A549 (cell line): ENCODE measurements at regions of chr2 and their contacts with region 1.

Region 1: GRCh38 chr2:164498836-164499235 is 122.4 kb downstream of the GRB14 start:
- DNase-seq: no peak
- ATAC-seq: no peak
- H3K4me3 ChIP-seq: no peak overlapping the region
- H3K27ac ChIP-seq: no peak overlapping the region
- H3K4me1 ChIP-seq: peaks cover 5% of the 10 kb centered on the region; the same call in 2 of the 3 replicates
- CTCF ChIP-seq: no peak
- EP300 ChIP-seq: no peak
- POLR2A ChIP-seq: no peak
- RAD21 ChIP-seq: no peak

Region 2: DNA sequence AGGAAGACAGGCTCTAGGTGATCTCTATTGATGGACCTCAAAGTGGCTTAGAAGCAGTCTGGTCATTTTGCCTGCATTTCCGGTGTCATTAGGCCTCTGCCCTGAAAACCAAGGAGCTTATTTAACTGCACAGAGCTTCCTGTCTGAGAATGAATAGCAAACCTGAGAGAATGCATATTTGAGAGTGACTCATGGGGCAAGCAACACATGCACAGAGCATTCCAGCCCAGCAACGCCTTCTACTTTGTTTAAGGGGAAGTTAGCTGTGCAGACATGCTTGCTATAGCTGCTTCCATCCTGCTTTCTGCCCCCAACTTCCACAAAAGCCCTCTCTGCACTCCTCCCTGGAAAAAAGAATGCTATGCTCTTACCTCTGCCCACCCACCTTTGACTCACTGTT is 110.3 kb before region 1 on chr2:
- CTCF ChIA-PET with region 1: no interaction called
- POLR2A ChIA-PET with region 1: no interaction called
- DNase-seq: peak; percentile 3 to 64
- ATAC-seq: peak; percentile 88 to 92; a peak in 5 of 6 replicates
- H3K4me3 ChIP-seq: no peak overlapping the region
- H3K27ac ChIP-seq: no peak overlapping the region
- H3K4me1 ChIP-seq: peaks cover 7% of the 10 kb centered on the region; the same call in 1 of the 3 replicates
- CTCF ChIP-seq: no peak
- EP300 ChIP-seq: no peak
- POLR2A ChIP-seq: no peak
- RAD21 ChIP-seq: no peak

Region 3: DNA sequence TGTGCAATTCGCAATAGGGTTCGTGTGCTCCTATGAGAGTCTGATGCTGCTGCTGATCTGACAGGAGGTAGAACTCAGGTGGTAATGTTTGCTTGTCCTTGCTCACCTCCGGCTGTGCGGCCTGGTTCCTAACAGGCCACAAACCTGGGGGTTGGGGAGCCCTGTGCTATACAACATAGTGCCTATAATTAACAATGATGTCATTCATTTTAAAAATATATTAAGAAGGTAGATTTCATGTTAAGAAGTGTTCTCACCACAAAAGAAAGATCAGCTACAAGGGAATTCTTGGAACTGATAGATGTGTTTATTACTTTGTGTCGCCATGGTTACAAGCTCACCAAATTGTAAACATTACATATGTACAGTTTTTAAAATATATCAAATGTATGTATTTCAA is 78.0 kb before region 1 on chr2:
- CTCF ChIA-PET with region 1: no interaction called
- POLR2A ChIA-PET with region 1: no interaction called
- DNase-seq: no peak
- ATAC-seq: no peak
- H3K4me3 ChIP-seq: no peak overlapping the region
- H3K27ac ChIP-seq: no peak overlapping the region
- H3K4me1 ChIP-seq: no peaks in the 10 kb centered on the region
- CTCF ChIP-seq: no peak
- EP300 ChIP-seq: no peak
- POLR2A ChIP-seq: no peak
- RAD21 ChIP-seq: no peak

Region 4: GRCh38 chr2:164447660-164448059 is 51.2 kb before region 1 on chr2:
- CTCF ChIA-PET with region 1: no interaction called
- POLR2A ChIA-PET with region 1: no interaction called
- DNase-seq: no peak
- ATAC-seq: no peak; a peak in 1 of 6 replicates
- H3K4me3 ChIP-seq: no peak overlapping the region
- H3K27ac ChIP-seq: no peak overlapping the region
- H3K4me1 ChIP-seq: no peaks in the 10 kb centered on the region
- CTCF ChIP-seq: no peak
- EP300 ChIP-seq: no peak
- POLR2A ChIP-seq: no peak
- RAD21 ChIP-seq: no peak

Region 5: GRCh38 chr2:164538240-164538866 is 39.5 kb after region 1 on chr2:
- CTCF ChIA-PET with region 1: interaction called, 12 read pairs
- POLR2A ChIA-PET with region 1: no interaction called
- DNase-seq: peak; percentile 52 to 55
- ATAC-seq: peak; percentile 86 to 93; a peak in 5 of 6 replicates
- H3K4me3 ChIP-seq: no peak overlapping the region
- H3K27ac ChIP-seq: no peak overlapping the region
- H3K4me1 ChIP-seq: peaks cover 20% of the 10 kb centered on the region
- CTCF ChIP-seq: peak; percentile 78
- EP300 ChIP-seq: no peak
- POLR2A ChIP-seq: no peak
- RAD21 ChIP-seq: peak; percentile 72 to 79